ENCODE measurements at regions of chr9 and their contacts with region 1.

Region 1: GRCh38 chr9:115035841-115036612 is 81.9 kb downstream of the TNC start:
- DNase-seq: peak; percentile 67
- H3K4me3 Mint-ChIP-seq: peak overlapping the region; percentile 60
- H3K27ac Mint-ChIP-seq: peak overlapping the region; percentile 88
- H3K4me1 Mint-ChIP-seq: peaks cover 23% of the 10 kb centered on the region
- H3K27me3 Mint-ChIP-seq: peaks cover 2% of the 10 kb centered on the region

Region 2: GRCh38 chr9:114718801-114719221 is 317.2 kb before region 1 on chr9:
- intact Hi-C with region 1: loop called (anchors 1 kb)
- DNase-seq: peak; percentile 98
- H3K4me3 Mint-ChIP-seq: peak overlapping the region; percentile 74
- H3K27ac Mint-ChIP-seq: peak overlapping the region; percentile 97
- H3K4me1 Mint-ChIP-seq: peaks cover 81% of the 10 kb centered on the region
- H3K27me3 Mint-ChIP-seq: no peaks in the 10 kb centered on the region

Region 3: DNA sequence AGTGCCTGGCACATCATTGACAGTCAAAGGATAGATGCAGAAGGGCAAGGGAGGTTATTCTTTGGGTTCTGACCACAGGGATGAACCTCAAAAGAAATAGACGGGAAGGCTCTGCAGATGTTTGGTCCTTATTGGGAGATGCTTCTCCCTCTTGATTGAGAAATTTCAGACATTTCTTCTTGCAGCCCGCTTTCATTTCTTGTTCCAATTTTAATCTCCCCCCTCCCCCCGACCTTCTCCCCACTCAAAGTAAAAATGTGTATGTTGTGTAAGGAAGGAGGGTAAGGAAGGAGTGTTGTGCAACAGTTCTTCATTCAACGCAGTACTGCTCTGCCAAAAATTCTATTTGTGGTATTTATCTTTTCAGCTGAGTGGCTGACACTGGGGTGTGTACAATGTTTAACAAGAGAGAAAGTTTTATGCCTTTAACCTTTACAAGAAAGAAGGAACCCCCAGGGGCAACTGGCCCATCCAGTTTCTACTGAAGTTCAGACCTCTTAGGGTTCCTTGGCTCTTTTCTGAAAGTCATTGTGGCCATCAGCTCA is 183.9 kb before region 1 on chr9:
- intact Hi-C with region 1: no loop called
- DNase-seq: no peak
- H3K4me3 Mint-ChIP-seq: no peak overlapping the region
- H3K27ac Mint-ChIP-seq: no peak overlapping the region
- H3K4me1 Mint-ChIP-seq: peaks cover 12% of the 10 kb centered on the region
- H3K27me3 Mint-ChIP-seq: peaks cover 2% of the 10 kb centered on the region

Region 4: GRCh38 chr9:115063058-115063845 is 27.2 kb after region 1 on chr9:
- intact Hi-C with region 1: no loop called
- DNase-seq: no peak
- H3K4me3 Mint-ChIP-seq: no peak overlapping the region
- H3K27ac Mint-ChIP-seq: no peak overlapping the region
- H3K4me1 Mint-ChIP-seq: peaks cover 7% of the 10 kb centered on the region
- H3K27me3 Mint-ChIP-seq: peaks cover 25% of the 10 kb centered on the region

Region 5: GRCh38 chr9:115080242-115080641 is 44.2 kb after region 1 on chr9:
- intact Hi-C with region 1: loop called (anchors 2 kb)
- DNase-seq: no peak
- H3K4me3 Mint-ChIP-seq: no peak overlapping the region
- H3K27ac Mint-ChIP-seq: no peak overlapping the region
- H3K4me1 Mint-ChIP-seq: no peaks in the 10 kb centered on the region
- H3K27me3 Mint-ChIP-seq: peaks cover 12% of the 10 kb centered on the region

Region 6: GRCh38 chr9:115135821-115136778 is 100.1 kb after region 1 on chr9:
- intact Hi-C with region 1: loop called (anchors 5 kb)
- DNase-seq: no peak
- H3K4me3 Mint-ChIP-seq: no peak overlapping the region
- H3K27ac Mint-ChIP-seq: no peak overlapping the region
- H3K4me1 Mint-ChIP-seq: peaks cover 10% of the 10 kb centered on the region
- H3K27me3 Mint-ChIP-seq: peaks cover 23% of the 10 kb centered on the region